ENCODE measurements at regions of chr18 and their contacts with region 1.

Region 1: GRCh38 chr18:35497370-35498197 is at the start of gene INO80C:
- DNase-seq: peak; percentile 94 to 97 (median 94)
- ATAC-seq: peak; percentile 96
- H3K4me3 ChIP-seq: peak within 1 kb of the TSS; percentile 70
- H3K27ac ChIP-seq: peak within 1 kb of the TSS; percentile 96
- H3K4me1 ChIP-seq: peaks cover 8 to 30% of the 10 kb centered on the region in 2 experiments; a peak in 4 of 5 replicates
- H3K27me3 ChIP-seq: no peaks in the 10 kb centered on the region
- CTCF ChIP-seq: peak in 1 of 3 experiments; percentile 3; a peak in 1 of 6 replicates
- EP300 ChIP-seq: peak; percentile 70
- POLR2A ChIP-seq: peak; percentile 99
- RAD21 ChIP-seq: peak; percentile 48 to 49
- polyA plus RNA-seq, gene INO80C: 51.3 to 53.3 TPM

Region 2: DNA sequence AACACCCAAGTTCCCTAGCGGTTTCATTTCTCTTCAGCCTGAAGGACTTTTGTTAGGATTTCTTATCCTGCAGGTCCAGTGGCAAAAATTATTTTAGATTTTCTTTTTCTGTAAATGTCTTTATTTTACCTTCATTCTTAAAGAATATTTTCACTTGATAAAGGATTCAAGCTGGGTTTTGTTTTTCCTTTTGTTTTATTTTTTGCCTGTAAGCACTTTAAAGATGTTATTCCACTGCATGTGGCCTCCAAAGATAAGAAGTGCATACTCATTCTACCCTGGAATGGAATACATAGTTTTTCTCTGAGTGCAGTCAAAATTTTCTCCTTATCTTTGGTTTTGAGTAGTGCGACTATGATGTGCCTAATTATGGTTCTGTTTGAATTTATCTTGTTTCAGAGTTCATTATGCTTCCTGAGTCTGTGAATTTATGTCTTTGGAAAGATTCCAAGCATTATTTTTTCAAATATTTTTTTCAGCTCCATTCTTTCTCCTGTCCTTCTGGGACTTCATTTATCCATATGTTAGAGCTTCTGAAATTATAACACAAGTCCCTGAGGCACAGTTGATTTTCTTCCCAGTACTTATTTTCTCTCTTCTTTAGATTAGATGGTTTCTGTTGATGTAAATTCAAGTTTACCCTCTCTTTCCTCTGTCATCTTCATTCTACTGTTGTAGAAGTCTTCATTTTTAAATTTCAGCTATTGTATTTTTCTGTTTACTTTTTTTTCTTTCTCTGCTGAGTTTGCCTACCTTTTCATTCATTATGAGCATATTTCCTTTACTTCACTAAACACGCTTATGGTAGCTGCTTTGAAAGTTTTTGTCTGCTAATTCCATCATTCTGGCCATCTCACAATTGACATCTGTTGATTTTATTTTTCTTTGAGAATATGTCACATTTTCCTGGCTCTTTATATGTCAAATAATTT is 386.8 kb before region 1 on chr18:
- CTCF ChIA-PET with region 1: no interaction called
- POLR2A ChIA-PET with region 1: no interaction called
- in situ Hi-C with region 1: no loop called
- intact Hi-C with region 1: loop called (anchors 1 kb)
- DNase-seq: peak; percentile 77 to 90 (median 82)
- ATAC-seq: peak; percentile 93
- H3K4me3 ChIP-seq: no peak overlapping the region
- H3K27ac ChIP-seq: peak overlapping the region; percentile 79
- H3K4me1 ChIP-seq: peaks cover 7 to 39% of the 10 kb centered on the region in 2 experiments; a peak in 4 of 5 replicates
- H3K27me3 ChIP-seq: no peaks in the 10 kb centered on the region
- CTCF ChIP-seq: no peak
- EP300 ChIP-seq: peak; percentile 99
- POLR2A ChIP-seq: no peak
- RAD21 ChIP-seq: peak in 1 of 2 experiments; percentile 15; a peak in 1 of 4 replicates

Region 3: DNA sequence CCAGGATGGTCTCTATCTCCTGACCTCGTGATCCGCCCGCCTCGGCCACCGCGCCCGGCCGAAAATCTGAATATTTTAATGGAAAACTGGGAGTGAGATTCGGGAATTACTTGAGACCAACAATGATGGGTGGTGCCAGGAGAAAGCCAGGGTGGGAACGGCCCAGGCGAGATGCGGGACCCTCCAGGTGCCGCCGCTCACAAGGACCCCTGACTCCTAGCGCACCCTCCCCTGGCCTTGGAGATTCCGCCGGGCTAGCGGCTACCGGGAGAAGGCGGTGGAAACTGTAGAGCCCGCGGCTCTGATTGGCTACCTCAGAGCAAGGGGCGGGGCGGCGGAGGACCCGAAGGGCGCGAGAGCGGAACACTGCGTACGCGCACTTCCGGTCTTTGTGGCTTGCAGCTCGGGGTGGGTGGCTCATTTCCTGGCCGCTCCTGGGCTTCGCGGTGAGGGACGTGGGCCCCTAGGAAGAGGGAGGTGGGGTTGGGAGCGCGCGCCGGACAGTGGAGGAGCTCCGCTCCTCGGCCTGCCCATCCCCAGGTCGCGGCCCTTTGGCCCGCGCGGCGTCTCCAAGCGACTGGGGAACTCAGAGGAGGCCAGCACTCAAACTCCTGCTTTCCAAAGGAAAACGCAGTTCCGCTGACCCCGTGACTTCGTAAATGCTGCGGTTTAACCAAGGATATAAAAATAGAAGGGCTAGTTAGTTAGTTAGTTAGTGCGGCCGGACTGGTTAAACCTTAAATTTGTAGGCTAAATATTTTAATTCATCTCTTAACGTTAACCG is 256.7 kb before region 1 on chr18 and contains the start of gene ZNF397:
- CTCF ChIA-PET with region 1: no interaction called
- POLR2A ChIA-PET with region 1: no interaction called
- in situ Hi-C with region 1: no loop called
- intact Hi-C with region 1: loop called (anchors 1 kb)
- DNase-seq: peak; percentile 99
- ATAC-seq: peak; percentile 98
- H3K4me3 ChIP-seq: peak within 1 kb of the TSS; percentile 61
- H3K27ac ChIP-seq: peak within 1 kb of the TSS; percentile 87
- H3K4me1 ChIP-seq: peaks cover 3 to 11% of the 10 kb centered on the region in 2 experiments
- H3K27me3 ChIP-seq: no peaks in the 10 kb centered on the region
- CTCF ChIP-seq: 0 out of 6 replicates have a peak, but pooled peaks of 1 of the 3 experiments have one; percentile 7
- EP300 ChIP-seq: peak; percentile 11; the same call in 1 of the 2 replicates
- POLR2A ChIP-seq: peak; percentile 97
- RAD21 ChIP-seq: peak; percentile 16 to 21; a peak in 2 of 4 replicates
- polyA plus RNA-seq, gene ZNF397: 6.4 to 8.7 TPM

Region 4: DNA sequence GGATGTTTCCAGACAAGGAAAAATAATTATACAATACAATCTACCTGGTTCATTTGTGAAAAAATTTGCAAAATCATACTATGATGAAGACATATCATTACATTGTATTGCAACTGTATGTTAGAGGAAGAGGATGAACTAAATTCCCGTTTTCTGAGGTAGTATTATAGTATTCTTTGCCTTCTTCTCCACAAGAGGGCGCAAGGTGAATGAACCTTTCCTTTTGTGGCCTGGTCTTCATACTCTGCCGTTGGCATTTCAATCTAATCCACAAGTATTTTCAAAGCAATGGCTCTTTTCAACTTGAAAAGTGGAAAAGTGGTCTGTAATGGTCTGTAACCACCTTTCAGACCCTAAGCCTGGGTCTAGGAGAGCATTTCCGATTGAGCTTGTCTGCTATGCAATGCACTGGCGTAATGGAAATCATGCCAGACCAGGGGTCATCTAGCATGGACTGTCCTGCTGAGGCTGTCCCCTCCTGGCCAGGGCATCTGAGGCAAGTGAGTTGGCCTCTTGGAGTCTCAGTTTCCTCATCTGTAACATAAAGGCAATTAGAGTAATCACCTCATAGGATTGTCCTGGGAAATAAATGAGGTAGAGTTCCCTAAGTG is 89.6 kb before region 1 on chr18:
- CTCF ChIA-PET with region 1: no interaction called
- POLR2A ChIA-PET with region 1: no interaction called
- in situ Hi-C with region 1: no loop called
- intact Hi-C with region 1: loop called (anchors 10 kb)
- DNase-seq: peak; percentile 61 to 85 (median 65)
- ATAC-seq: peak; percentile 90
- H3K4me3 ChIP-seq: no peak overlapping the region
- H3K27ac ChIP-seq: no peak overlapping the region
- H3K4me1 ChIP-seq: peaks cover 8 to 14% of the 10 kb centered on the region in 2 experiments; a peak in 3 of 5 replicates
- H3K27me3 ChIP-seq: peaks cover 0 to 9% of the 10 kb centered on the region in 2 experiments; a peak in 1 of 5 replicates
- CTCF ChIP-seq: peak; percentile 69 to 91 (median 84)
- EP300 ChIP-seq: no peak; the same call in 1 of the 2 replicates
- POLR2A ChIP-seq: no peak
- RAD21 ChIP-seq: peak; percentile 87 to 95

Region 5: DNA sequence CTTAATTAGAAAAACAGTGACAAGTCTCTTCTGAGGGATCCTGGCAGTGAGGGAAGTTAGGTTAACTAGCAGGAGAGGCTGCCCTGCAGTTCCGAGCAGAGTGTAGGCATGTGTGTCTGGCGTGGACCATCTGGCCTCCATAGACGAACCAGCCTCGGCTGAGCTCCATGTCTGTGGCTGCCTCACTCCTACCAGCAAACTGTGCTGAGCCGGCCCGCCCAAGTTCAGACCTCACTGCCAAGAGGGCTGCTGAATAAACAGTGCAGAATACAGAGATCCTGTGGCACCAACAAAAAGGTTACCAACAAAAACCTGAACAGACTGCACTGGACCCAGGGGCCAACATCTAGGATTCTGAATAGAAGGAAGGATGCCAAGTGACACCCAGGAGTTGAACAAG is 27.1 kb before region 1 on chr18:
- CTCF ChIA-PET with region 1: no interaction called
- POLR2A ChIA-PET with region 1: interaction called, 11 read pairs
- in situ Hi-C with region 1: no loop called
- intact Hi-C with region 1: no loop called
- DNase-seq: no peak
- ATAC-seq: no peak
- H3K4me3 ChIP-seq: no peak overlapping the region
- H3K27ac ChIP-seq: no peak overlapping the region
- H3K4me1 ChIP-seq: peaks cover 0 to 7% of the 10 kb centered on the region in 2 experiments; a peak in 2 of 5 replicates
- H3K27me3 ChIP-seq: no peaks in the 10 kb centered on the region
- CTCF ChIP-seq: no peak
- EP300 ChIP-seq: no peak
- POLR2A ChIP-seq: no peak
- RAD21 ChIP-seq: no peak

Region 6: DNA sequence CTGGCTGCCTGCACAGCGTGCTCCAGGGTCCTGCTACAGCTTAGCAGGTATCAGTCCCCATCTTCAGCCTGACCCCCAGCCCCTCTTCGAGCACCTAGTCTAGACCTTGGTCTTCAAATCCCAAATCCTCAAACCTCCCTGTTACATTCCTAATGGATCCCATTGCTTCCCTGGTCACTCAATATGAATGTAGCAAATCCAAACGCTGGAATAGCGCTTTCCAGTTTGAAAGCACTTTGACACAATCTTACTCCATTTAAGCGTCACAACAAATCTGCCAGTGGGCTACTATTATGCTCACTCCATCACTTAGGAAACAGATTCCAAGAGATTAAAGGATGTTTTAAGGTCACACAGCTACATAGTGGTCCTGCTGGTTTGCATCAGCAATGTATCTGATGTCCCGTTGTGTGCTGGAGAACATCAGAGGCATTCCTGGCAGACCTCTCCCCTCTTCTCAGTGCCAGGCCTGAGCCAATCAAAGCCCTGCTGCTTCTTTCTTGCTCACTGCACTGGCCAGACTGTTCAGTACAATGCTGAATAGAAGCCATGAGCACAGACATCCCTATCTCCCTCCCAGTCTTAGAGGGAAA is 11.3 kb after region 1 on chr18:
- CTCF ChIA-PET with region 1: no interaction called
- POLR2A ChIA-PET with region 1: interaction called, 16 read pairs
- in situ Hi-C with region 1: no loop called
- intact Hi-C with region 1: no loop called
- DNase-seq: no peak
- ATAC-seq: no peak
- H3K4me3 ChIP-seq: no peak overlapping the region
- H3K27ac ChIP-seq: no peak overlapping the region
- H3K4me1 ChIP-seq: peaks cover 3 to 34% of the 10 kb centered on the region in 2 experiments
- H3K27me3 ChIP-seq: no peaks in the 10 kb centered on the region; a peak in 1 of 5 replicates
- CTCF ChIP-seq: no peak
- EP300 ChIP-seq: no peak
- POLR2A ChIP-seq: no peak
- RAD21 ChIP-seq: no peak

Region 7: GRCh38 chr18:36195427-36196122 is 698.0 kb after region 1 on chr18:
- CTCF ChIA-PET with region 1: no interaction called
- POLR2A ChIA-PET with region 1: no interaction called
- in situ Hi-C with region 1: no loop called
- intact Hi-C with region 1: no loop called
- DNase-seq: no peak
- ATAC-seq: peak; percentile 6; the same call in 2 of the 3 replicates
- H3K4me3 ChIP-seq: no peak overlapping the region
- H3K27ac ChIP-seq: no peak overlapping the region
- H3K4me1 ChIP-seq: peaks cover 12 to 13% of the 10 kb centered on the region in 2 experiments; a peak in 4 of 5 replicates
- H3K27me3 ChIP-seq: no peaks in the 10 kb centered on the region
- CTCF ChIP-seq: no peak
- EP300 ChIP-seq: no peak
- POLR2A ChIP-seq: 0 out of 2 replicates have a peak, but pooled peaks have one; percentile 18
- RAD21 ChIP-seq: no peak

Measured in K562 (cell line).